HepG2 (cell line): ENCODE measurements at regions of chr6 and their contacts with region 1.

Region 1: GRCh38 chr6:107318100-107318736 is 141.1 kb downstream of the PDSS2 start:
- DNase-seq: peak; percentile 44
- ATAC-seq: peak; percentile 93
- H3K4me3 ChIP-seq: no peak overlapping the region
- H3K27ac ChIP-seq: no peak overlapping the region
- H3K4me1 ChIP-seq: peaks cover 22% of the 10 kb centered on the region
- H3K27me3 ChIP-seq: no peaks in the 10 kb centered on the region
- CTCF ChIP-seq: peak; percentile 82
- EP300 ChIP-seq: no peak
- POLR2A ChIP-seq: no peak
- RAD21 ChIP-seq: peak; percentile 54

Region 2: DNA sequence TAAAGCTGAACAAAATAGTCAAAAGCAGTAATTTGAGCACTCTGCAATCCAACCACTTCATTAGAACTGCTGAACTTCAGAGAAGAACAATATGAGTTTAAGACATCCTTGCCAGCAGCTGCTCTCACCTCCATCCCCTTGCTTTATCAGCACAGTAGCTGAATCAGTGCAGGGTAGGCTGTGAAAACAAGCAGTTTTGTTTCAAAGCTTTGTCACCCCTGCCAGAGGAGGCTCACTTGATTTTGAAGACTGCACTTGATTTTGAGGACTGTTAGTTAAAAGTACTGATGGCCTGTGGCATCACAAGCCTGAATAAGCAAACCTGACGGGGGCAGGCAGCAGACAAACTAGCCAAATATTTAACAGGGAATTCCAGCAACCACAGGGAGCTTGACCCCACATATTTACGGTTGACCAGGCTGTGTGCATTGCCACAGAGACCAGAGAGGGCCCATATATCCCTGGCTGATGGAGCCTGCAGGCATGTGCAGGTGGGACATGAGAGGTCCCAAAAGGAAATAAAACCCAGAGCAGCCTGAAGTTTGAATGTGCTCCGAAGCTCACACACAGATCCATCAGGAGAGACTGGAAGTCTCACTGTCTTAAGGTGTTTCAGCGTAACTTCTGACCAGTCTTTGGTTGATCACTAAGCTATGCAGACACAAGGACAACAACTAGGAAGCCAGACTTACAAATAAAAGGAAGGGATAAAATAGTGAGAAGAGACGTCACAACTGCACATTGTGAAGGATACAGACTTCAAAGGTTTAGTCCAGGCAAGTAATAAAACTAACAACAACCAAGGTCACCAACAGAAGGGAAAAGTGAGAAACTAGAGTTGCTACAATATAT is 43.8 kb after region 1 on chr6:
- CTCF ChIA-PET with region 1: no interaction called
- POLR2A ChIA-PET with region 1: no interaction called
- in situ Hi-C with region 1: no loop called
- intact Hi-C with region 1: loop called (anchors 5 kb)
- DNase-seq: peak; percentile 85
- ATAC-seq: peak; percentile 100
- H3K4me3 ChIP-seq: no peak overlapping the region
- H3K27ac ChIP-seq: peak overlapping the region; percentile 11
- H3K4me1 ChIP-seq: peaks cover 20% of the 10 kb centered on the region
- H3K27me3 ChIP-seq: no peaks in the 10 kb centered on the region
- CTCF ChIP-seq: peak; percentile 19; the same call in 1 of the 2 replicates
- EP300 ChIP-seq: peak; percentile 51 to 65; a peak in 3 of 4 replicates
- POLR2A ChIP-seq: no peak
- RAD21 ChIP-seq: no peak

Region 3: DNA sequence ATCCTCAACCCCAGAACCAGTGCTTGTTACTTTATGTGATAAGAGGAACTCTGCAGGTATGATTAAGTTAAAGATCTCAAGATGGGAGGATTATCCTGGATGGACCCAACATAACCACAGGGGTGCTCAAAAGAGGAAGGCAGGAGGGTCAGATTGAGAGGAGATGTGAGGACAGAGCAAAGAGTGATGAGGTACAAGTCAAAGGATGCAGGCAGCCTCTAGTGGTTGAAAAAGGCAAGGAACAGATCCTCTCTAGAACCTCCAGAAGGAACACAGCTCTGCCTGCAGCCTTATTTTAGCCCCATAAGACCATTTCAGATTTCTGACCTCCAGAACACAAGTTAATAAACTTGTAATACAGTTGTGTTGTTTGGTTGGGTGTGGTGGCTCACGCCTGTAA is 99.9 kb after region 1 on chr6:
- CTCF ChIA-PET with region 1: no interaction called
- POLR2A ChIA-PET with region 1: no interaction called
- in situ Hi-C with region 1: no loop called
- intact Hi-C with region 1: loop called (anchors 1 kb)
- DNase-seq: peak; percentile 11
- ATAC-seq: peak; percentile 77
- H3K4me3 ChIP-seq: no peak overlapping the region
- H3K27ac ChIP-seq: no peak overlapping the region
- H3K4me1 ChIP-seq: peaks cover 7% of the 10 kb centered on the region
- H3K27me3 ChIP-seq: no peaks in the 10 kb centered on the region; a peak in 1 of 5 replicates
- CTCF ChIP-seq: peak; percentile 45
- EP300 ChIP-seq: no peak
- POLR2A ChIP-seq: no peak
- RAD21 ChIP-seq: no peak

Region 4: DNA sequence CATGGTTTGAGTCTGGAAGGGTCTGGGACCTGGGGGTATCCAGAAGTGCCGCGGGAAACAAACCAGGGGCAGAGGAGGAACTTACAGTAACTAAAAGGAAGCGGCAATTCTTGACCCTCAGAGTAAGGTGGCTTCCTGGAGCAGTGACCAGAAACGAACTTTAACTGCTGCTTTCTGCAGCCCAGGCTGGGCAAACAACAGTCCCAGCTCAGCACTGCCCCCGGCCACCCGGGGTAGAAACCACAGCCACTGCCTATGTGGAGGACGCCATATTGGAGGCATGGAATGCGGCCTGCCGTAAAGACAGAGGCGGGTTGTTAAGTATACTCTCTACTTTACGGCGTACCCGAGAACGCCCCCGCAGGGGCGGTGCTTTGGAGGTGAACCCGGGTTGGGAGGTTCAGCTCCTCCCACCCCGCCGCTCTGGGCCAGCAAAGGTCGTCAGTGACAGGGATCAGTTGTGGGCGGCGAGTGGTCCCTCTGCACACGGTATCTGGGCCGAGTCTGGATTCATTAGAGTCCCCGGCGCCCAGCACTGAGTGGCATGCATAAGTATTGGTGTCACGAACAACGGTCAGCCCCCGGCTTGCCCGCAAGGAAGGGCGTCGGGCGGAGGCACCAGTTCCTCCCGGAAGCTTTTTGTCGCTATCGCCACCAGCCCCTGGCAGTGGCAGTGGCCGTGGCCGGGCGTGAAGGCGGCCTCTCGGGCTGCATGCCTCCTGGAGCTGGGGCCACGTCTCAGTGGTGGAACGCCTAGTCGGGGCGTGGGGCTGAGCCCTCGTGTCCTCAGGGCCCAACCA is 141.3 kb after region 1 on chr6 and contains the start of gene PDSS2:
- CTCF ChIA-PET with region 1: no interaction called
- POLR2A ChIA-PET with region 1: interaction called, 6 read pairs
- in situ Hi-C with region 1: loop called (anchors 10 kb)
- intact Hi-C with region 1: loop called (anchors 1 kb)
- DNase-seq: peak; percentile 97
- ATAC-seq: peak; percentile 95
- H3K4me3 ChIP-seq: peak within 1 kb of the TSS; percentile 90 to 98 (median 92)
- H3K27ac ChIP-seq: peak within 1 kb of the TSS; percentile 93
- H3K4me1 ChIP-seq: peaks cover 57% of the 10 kb centered on the region
- H3K27me3 ChIP-seq: no peaks in the 10 kb centered on the region; a peak in 1 of 5 replicates
- CTCF ChIP-seq: peak; percentile 85
- EP300 ChIP-seq: peak in 1 of 2 experiments; percentile 51; a peak in 1 of 4 replicates
- POLR2A ChIP-seq: peak; percentile 93 to 99
- RAD21 ChIP-seq: peak; percentile 29; the same call in 1 of the 2 replicates
- total RNA-seq, gene PDSS2: 17.0 and 23.7 TPM in 2 replicates

Region 5: GRCh38 chr6:107489636-107490565 is 171.7 kb after region 1 on chr6 and contains the start of gene SOBP:
- CTCF ChIA-PET with region 1: no interaction called
- POLR2A ChIA-PET with region 1: no interaction called
- in situ Hi-C with region 1: no loop called
- intact Hi-C with region 1: loop called (anchors 10 kb)
- DNase-seq: peak; percentile 44
- ATAC-seq: peak; percentile 36
- H3K4me3 ChIP-seq: peak within 1 kb of the TSS; percentile 94 to 98 (median 96)
- H3K27ac ChIP-seq: peak within 1 kb of the TSS; percentile 76
- H3K4me1 ChIP-seq: peaks cover 35% of the 10 kb centered on the region
- H3K27me3 ChIP-seq: no peaks in the 10 kb centered on the region; a peak in 2 of 5 replicates
- CTCF ChIP-seq: no peak
- EP300 ChIP-seq: no peak
- POLR2A ChIP-seq: peak in 1 of 2 experiments; percentile 60; a peak in 2 of 4 replicates
- RAD21 ChIP-seq: 0 out of 2 replicates have a peak, but pooled peaks have one; percentile 32
- total RNA-seq, gene SOBP: 5.0 and 6.9 TPM in 2 replicates

Region 6: GRCh38 chr6:107585815-107586435 is 267.7 kb after region 1 on chr6:
- CTCF ChIA-PET with region 1: no interaction called
- POLR2A ChIA-PET with region 1: no interaction called
- in situ Hi-C with region 1: no loop called
- intact Hi-C with region 1: loop called (anchors 10 kb)
- DNase-seq: no peak
- ATAC-seq: no peak
- H3K4me3 ChIP-seq: no peak overlapping the region
- H3K27ac ChIP-seq: no peak overlapping the region
- H3K4me1 ChIP-seq: no peaks in the 10 kb centered on the region
- H3K27me3 ChIP-seq: no peaks in the 10 kb centered on the region
- CTCF ChIP-seq: no peak
- EP300 ChIP-seq: no peak
- POLR2A ChIP-seq: no peak
- RAD21 ChIP-seq: no peak

Region 7: DNA sequence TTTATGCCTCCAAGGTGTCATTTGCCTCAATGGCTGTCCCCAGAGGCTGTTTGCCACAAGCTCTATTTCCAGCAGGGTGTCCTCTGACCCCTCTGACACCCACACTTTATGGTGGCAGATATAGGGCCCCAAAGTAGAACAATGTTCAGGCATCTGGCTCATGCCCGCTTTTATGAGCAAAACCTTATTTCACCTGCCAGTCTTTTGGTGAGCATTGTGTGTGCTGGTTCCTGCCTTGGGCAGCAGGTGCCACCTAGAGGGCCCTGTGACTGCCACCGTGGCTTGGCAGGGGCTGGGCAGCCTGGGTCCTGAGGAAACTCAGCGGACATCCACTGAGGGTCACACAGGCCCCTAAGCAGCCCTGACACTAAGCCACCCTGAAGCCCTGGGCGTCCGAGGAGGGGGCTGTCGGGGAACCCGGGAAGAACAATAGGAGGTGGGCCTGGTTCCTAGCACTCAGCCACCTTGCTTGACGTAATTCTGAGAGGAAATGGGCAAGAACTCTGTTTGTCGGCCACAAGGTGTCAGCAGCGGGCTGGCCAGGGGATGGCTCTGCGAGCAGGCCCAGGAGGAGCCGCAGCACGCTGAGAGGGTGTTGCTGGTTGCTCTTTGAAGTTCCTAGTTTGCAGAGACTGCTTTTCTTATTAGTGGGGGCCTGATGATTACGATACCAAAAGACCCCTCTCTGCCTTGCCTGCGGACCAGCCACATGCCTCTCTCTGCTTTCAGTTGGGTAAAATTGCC is 356.9 kb after region 1 on chr6:
- CTCF ChIA-PET with region 1: no interaction called
- POLR2A ChIA-PET with region 1: no interaction called
- in situ Hi-C with region 1: no loop called
- intact Hi-C with region 1: loop called (anchors 10 kb)
- DNase-seq: peak; percentile 75
- ATAC-seq: peak; percentile 98
- H3K4me3 ChIP-seq: peak overlapping the region; percentile 41 to 67 (median 52); a peak in 5 of 6 replicates
- H3K27ac ChIP-seq: no peak overlapping the region
- H3K4me1 ChIP-seq: peaks cover 34% of the 10 kb centered on the region
- H3K27me3 ChIP-seq: peaks cover 0 to 3% of the 10 kb centered on the region in 2 experiments; a peak in 1 of 5 replicates
- CTCF ChIP-seq: peak; percentile 94
- EP300 ChIP-seq: no peak
- POLR2A ChIP-seq: no peak
- RAD21 ChIP-seq: peak; percentile 92